BJ (cell line): ENCODE measurements at regions of chr9 and their contacts with region 1.

Region 1: DNA sequence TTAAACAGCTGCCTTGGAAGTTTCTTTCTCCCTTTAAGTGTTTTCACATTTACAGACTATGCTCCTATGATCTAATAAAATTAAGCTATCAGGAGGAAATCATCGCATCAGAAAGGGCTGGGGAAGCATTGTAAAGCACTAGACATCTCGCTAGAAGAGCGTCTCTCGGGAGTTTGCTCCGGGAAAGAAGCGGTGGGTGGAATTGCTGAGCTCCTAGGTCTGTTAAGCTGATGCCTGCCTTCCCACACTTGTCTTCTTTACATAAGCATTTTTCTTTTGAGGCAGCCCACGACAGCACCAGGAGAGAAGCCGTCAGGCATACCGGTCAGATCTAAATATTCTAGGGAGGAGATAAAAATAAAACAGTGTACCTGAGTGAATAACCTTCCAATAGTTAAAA is 541.7 kb upstream of the TUSC1 start:
- DNase-seq: no peak
- H3K4me3 ChIP-seq: no peak overlapping the region
- H3K27me3 ChIP-seq: no peaks in the 10 kb centered on the region
- CTCF ChIP-seq: no peak

Region 2: DNA sequence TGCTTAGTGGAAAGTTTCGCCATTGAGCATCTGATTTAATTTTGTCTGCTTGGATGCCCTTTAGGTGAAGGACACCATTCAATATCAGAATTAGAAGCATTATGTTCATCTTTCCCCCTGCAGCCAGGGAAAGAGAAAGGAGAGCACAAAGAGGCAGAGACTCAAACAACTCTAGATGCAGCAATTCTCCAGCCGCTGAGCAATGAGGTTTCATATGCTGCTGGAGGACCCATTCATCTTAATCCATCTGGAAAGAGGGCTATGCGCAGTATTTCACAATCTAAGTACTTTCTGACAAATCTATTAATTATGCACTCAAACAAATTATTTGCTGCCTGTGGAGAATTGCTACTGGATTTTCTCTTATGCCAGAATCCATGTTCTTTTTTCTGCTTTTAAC is 14.7 kb before region 1 on chr9:
- CTCF ChIA-PET with region 1: no interaction called
- POLR2A ChIA-PET with region 1: interaction called, 22 read pairs
- DNase-seq: no peak
- H3K4me3 ChIP-seq: no peak overlapping the region
- H3K27me3 ChIP-seq: no peaks in the 10 kb centered on the region
- CTCF ChIP-seq: no peak